Cardiac septum (tissue), 1 donor: ENCODE measurements at regions of chr7 and their contacts with region 1.

Region 1: GRCh38 chr7:112571852-112572607 is 91.2 kb downstream of the LSMEM1 start:
- DNase-seq: no peak

Region 2: DNA sequence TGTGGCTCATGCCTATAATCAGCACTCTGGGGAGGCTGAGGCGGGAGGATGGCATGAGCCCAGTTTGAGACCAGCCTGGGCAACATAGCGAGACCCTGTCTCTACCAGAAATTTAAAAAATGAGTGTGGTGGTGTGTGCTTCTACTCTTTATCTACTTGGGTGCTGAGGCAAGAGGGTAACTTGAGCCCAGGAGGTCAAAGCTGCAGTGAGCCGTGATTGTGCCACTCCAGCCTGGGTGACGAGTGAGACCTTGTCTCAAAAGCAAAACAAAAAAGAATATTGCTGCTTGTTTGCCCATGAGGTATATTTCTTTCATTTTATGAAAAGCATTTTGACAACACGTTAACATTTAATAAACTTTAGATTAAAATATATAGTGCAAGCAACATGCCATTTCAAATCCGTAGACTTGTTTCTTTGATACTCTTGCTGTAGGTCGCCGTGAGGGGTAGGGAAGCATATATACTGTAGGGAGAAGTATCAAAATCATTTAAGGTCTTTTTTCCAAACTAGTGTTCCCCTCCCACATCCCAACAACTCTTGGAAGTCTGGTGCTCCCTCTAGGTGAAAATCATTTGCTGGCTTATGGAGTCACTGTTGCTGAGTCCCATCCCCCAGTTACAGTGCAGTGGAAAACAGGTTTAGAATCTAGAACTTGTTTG is 95.5 kb before region 1 on chr7:
- intact Hi-C with region 1: no loop called
- DNase-seq: no peak

Region 3: DNA sequence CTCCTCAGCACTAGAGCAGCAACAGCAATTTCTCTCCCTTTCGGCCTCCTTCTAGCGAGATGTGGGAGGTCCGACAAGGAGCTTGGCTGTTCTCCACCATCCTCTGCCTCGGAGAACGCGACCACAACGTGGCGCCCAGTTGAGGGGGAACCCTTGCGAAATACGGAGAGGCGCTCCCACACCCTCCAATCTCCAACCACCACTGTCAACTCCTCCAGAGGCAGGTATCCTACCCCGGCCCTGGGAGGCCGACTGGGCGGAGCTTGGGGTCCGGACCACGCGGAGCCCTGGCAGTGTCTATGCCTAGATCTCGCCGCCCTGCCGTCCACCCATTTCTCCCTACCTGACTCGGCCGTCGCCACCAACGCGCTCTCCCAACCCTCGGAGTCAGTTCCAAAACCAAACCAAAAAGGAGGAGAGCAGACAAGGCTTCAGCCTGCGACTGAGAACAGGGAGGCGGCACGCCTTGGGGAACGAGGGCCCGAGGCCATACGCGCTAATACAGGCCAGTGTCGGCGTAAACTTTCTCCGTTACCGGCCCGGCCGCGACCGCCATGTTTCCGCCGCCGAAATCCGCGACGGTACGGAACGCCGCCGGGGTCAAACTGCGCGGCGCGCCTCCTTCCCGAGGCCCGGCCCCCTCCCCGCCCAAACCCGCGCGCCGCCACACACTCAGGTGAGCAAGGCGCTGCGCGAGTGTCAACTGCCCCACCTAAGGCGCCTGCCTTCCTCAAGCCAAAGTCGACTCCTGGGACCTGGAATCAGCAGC is 218.0 kb after region 1 on chr7 and contains the start of gene TMEM168:
- intact Hi-C with region 1: loop called (anchors 10 kb)
- DNase-seq: peak; percentile 91
- total RNA-seq, gene TMEM168: 20.6 TPM

Region 4: DNA sequence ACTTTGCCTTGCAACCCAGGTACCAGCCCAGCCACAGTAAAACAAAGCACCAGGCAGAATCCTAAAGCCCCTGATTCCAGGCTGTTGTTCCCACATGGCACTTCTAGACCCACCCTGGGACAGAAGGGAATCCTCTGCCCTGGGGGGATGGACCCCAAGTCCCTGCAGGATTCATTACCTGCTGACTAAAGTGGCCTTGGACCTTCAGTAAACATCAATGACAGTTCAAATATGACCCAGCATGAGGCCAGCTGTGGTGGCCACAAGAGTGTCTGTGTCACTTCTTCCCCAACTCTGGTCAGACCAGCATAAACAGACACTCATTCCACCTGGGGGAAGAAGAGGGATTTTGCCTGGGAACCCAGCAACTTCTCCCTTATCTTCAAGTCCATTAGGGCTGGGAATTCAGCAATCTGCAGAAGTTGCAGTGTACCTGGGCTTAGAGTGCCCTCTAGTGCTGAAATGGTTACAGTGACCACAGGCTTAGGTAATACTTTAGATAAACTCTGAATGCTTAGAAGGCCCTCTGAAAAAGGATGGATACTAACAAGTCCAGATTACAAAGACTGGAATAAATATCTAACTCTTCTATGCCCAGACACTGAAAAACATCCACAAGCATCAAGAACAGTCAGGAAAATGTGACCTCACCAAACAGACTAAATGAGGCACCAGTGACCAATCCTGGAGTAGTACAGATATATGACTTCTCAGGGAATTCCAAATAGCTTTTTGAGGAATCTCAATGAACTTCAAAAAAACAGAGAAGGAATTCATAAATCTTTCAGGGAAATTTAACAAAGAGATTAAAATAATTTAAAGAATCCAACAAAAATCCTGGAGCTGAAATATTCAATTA is 326.6 kb after region 1 on chr7:
- intact Hi-C with region 1: loop called (anchors 10 kb)
- DNase-seq: no peak